ENCODE measurements at regions of chr16 and their contacts with region 1.

Region 1: DNA sequence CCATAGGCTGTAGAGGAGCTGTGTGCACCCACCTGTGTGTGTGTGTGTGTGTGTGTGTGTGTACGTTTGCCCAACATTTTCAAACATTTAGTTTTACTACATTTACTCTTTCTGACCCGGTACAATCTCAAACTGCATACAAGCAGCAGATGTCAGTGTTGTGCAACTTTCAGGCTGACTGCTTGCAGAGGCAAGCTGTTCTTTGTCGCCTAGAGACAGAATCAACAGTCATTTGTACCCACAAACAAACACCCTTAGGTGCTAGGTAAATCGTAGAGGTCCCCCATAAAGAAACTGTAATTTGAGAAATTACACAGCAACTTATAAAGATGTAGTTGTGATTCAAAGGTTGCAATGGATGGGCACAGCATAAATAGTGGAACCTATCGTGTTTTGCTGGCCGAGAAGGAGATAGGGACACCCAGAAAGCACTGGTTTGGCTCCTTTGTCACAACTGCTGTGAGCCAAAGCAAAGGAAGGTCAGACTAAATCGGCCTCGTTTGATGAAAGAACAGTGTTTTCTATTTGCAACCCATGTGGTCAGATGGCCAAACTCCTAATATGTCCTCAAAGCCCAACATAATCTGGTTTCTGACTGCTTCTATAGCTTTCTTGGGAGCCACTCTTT is 478.4 kb downstream of the TOX3 start:
- DNase-seq: peak; percentile 36
- H3K4me3 ChIP-seq: no peak overlapping the region
- H3K27ac ChIP-seq: no peak overlapping the region
- H3K4me1 ChIP-seq: peaks cover 5% of the 10 kb centered on the region
- H3K27me3 ChIP-seq: no peaks in the 10 kb centered on the region
- CTCF ChIP-seq: peak in 3 of 4 experiments; percentile 23 to 57 (median 32)
- POLR2A ChIP-seq: no peak

Region 2: DNA sequence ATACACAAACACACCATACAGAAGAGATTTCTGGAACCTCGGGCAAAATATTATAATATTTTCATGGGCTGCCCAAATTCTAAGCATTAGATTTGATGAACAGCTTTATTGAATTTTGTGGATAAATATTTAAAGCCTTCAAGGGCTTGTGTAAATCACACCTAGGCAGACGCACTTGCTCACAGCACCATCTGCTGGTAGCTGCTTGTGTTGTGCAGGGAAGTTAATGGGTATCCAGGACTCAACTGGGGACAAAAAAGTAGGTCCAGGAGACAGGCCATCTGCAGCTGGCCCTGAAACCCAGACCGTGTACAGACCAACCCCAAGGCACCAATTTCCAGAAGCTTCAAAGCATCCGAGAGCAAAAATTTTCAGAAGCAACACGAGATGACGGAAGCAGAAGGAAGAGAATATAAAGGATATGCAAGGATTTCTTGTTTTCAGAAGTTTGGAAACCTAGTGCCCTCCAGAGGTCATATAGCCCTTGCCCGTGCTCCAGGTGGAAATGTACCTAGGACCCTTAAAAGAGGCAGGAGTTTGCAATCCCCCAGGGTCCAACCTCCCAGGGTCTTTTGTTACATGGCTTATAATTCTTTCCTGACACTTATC is 844.1 kb after region 1 on chr16:
- intact Hi-C with region 1: loop called (anchors 10 kb)
- DNase-seq: peak; percentile 56
- H3K4me3 ChIP-seq: no peak overlapping the region
- H3K27ac ChIP-seq: no peak overlapping the region
- H3K4me1 ChIP-seq: no peaks in the 10 kb centered on the region
- H3K27me3 ChIP-seq: no peaks in the 10 kb centered on the region
- CTCF ChIP-seq: peak; percentile 65 to 79 (median 67)
- POLR2A ChIP-seq: no peak

Region 3: GRCh38 chr16:53022374-53022773 is 953.8 kb after region 1 on chr16:
- intact Hi-C with region 1: loop called (anchors 10 kb)
- DNase-seq: peak; percentile 40
- H3K4me3 ChIP-seq: no peak overlapping the region
- H3K27ac ChIP-seq: no peak overlapping the region
- H3K4me1 ChIP-seq: no peaks in the 10 kb centered on the region
- H3K27me3 ChIP-seq: no peaks in the 10 kb centered on the region
- CTCF ChIP-seq: peak in 3 of 4 experiments; percentile 39 to 64 (median 55)
- POLR2A ChIP-seq: no peak